ENCODE measurements at regions of chr16 and their contacts with region 1.

Region 1: GRCh38 chr16:72124761-72125634 is 31.4 kb downstream of the DHX38 start:
- DNase-seq: peak; percentile 28 to 73 (median 52)
- ATAC-seq: peak; percentile 57
- H3K4me3 ChIP-seq: no peak overlapping the region
- H3K4me3 Mint-ChIP-seq: no peak overlapping the region
- H3K27ac ChIP-seq: no peak overlapping the region
- H3K27ac Mint-ChIP-seq: no peak overlapping the region
- H3K4me1 ChIP-seq: no peaks in the 10 kb centered on the region
- H3K4me1 Mint-ChIP-seq: no peaks in the 10 kb centered on the region
- H3K27me3 ChIP-seq: no peaks in the 10 kb centered on the region
- H3K27me3 Mint-ChIP-seq: no peaks in the 10 kb centered on the region
- CTCF ChIP-seq: peak; percentile 66

Region 2: DNA sequence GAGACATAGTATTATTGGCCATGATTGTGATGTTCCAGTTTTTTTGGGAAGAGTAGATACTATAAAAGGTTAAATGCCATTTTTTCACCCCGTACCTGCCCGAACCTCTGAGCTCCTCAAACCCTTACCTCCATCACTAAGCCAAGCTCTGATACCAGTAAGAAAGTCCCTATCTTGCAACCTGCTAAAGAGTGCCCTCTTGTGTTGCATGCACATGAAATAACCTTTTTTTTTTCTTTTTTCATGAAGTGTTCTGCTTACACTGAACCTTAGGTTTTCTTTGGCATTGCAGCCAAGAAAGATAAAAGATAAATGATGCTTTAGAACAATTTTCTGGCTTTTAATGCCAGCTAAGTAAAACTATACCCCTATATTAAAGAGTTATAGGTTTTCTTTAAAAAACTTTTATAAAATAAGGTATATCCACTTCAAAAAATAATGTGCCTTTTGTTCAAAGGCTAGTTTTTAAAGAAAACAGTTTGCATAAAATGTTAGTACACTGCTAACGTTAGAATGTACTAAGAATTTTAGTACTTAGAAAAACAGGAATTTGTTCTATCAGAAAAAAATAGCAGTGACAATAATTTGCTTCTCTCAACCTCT is 342.3 kb after region 1 on chr16:
- CTCF ChIA-PET with region 1: no interaction called
- POLR2A ChIA-PET with region 1: no interaction called
- intact Hi-C with region 1: loop called in 1 of 2 experiments (anchors 5 kb)
- DNase-seq: peak in 1 of 9 experiments; percentile 15
- ATAC-seq: no peak
- H3K4me3 ChIP-seq: no peak overlapping the region
- H3K4me3 Mint-ChIP-seq: no peak overlapping the region
- H3K27ac ChIP-seq: no peak overlapping the region
- H3K27ac Mint-ChIP-seq: no peak overlapping the region
- H3K4me1 ChIP-seq: no peaks in the 10 kb centered on the region
- H3K4me1 Mint-ChIP-seq: no peaks in the 10 kb centered on the region
- H3K27me3 ChIP-seq: no peaks in the 10 kb centered on the region
- H3K27me3 Mint-ChIP-seq: no peaks in the 10 kb centered on the region
- CTCF ChIP-seq: no peak

Region 3: DNA sequence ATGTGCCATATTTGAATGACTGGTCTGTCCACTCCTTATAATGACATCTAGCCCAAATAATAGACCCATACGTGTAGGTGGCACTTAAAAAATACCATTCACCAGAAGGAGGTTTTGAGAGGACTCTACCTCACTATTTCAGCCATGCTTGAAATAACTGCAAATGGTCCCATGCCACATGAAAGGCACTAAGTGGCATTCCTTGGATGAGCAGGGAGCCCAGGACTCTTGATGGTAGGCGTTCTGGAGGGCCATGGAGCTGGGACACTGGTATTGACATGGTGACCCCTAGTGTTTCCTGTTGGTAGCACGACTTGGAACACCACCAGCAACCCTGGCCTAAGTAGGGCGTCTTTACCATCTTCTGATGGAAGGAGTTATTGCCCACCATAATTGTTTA is 1071.7 kb after region 1 on chr16:
- CTCF ChIA-PET with region 1: no interaction called
- POLR2A ChIA-PET with region 1: no interaction called
- intact Hi-C with region 1: loop called in 1 of 2 experiments (anchors 5 kb)
- DNase-seq: peak in 4 of 9 experiments; percentile 3 to 37 (median 14)
- ATAC-seq: no peak
- H3K4me3 ChIP-seq: no peak overlapping the region
- H3K4me3 Mint-ChIP-seq: no peak overlapping the region
- H3K27ac ChIP-seq: no peak overlapping the region
- H3K27ac Mint-ChIP-seq: no peak overlapping the region
- H3K4me1 ChIP-seq: no peaks in the 10 kb centered on the region
- H3K4me1 Mint-ChIP-seq: no peaks in the 10 kb centered on the region
- H3K27me3 ChIP-seq: no peaks in the 10 kb centered on the region
- H3K27me3 Mint-ChIP-seq: no peaks in the 10 kb centered on the region
- CTCF ChIP-seq: no peak

Region 4: DNA sequence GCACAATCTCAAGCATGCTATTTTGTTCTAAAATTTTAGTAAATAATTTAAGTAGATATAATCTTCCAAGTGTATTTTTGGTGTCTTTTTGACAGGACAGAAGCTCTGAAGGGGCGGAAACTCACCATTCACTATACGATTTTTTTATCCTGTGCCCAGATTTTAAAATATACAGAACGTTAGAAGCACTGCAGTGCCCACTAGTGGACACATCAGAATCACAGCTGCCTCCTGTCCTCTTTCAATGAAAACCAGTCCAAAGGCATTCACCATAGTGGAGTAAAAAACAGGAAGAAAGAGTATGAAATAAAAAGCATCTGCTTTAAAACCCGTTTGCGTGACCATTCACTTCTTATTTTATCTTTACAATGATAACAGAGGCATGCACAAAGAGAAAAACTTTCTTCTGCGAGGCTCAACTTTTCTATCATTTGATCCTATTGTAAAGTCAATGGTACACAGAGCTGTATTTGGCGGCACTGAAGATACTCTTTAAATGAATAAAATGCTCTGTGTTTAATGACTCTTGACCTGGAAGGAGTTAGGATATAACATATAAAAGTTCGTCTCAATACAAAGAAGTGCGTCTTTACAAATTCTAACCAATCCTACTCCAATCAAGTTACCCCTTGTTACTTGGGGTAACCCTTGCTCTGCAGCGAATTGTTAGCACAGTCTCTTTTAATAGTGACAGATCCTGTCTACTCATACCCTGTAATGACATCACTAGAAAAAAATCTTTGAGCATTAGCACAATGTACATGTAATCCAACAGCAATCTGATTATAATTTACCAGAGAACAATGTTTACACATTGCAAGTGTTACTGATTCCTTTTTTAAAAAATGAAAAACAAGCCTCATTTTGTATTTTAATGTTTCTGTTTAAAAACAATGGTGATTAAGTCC is 1831.8 kb after region 1 on chr16:
- CTCF ChIA-PET with region 1: interaction called, 8 read pairs
- POLR2A ChIA-PET with region 1: no interaction called
- intact Hi-C with region 1: loop called in 1 of 2 experiments (anchors 2 kb)
- DNase-seq: peak in 4 of 9 experiments; percentile 15 to 47 (median 20)
- ATAC-seq: no peak
- H3K4me3 ChIP-seq: no peak overlapping the region
- H3K4me3 Mint-ChIP-seq: no peak overlapping the region
- H3K27ac ChIP-seq: no peak overlapping the region
- H3K27ac Mint-ChIP-seq: no peak overlapping the region
- H3K4me1 ChIP-seq: no peaks in the 10 kb centered on the region
- H3K4me1 Mint-ChIP-seq: no peaks in the 10 kb centered on the region
- H3K27me3 ChIP-seq: no peaks in the 10 kb centered on the region
- H3K27me3 Mint-ChIP-seq: peaks cover 2% of the 10 kb centered on the region
- CTCF ChIP-seq: peak; percentile 61